ENCODE measurements at regions of chr4 and their contacts with region 1.

Region 1: DNA sequence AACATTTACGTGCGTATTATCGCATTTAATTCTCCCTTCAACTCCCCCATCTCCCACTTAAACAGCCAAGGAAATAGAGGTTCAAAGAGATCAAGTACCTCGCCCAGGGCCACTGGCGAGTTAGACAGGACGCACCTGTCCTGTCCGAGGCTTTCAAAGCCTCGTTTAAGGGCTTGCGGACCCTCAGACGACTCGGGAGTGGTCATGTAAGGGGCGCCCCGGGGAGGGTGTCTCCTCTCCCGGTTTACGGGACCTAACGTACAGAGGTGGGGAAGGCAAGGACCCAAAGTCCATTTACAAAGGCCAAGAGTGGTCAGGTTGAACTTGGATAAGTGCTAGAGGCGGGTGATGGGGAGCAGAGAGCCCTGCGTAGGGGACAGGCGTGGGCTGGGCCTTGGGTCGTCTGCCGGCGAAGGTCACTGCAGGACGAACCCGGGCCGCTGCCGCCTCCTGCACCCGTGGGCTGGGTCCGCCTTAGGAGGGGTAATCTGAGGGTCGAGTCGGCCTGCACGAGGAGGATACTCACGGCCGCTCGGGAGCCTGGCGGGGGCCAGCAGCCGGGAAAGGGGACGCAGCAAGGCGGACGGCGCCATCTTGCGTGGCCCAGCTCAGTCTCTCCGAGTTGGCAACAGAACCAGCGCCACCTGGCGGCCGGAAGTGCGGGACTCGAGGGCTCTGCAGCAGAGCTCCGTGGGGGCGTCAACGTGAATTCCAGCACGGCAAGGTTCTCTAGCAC is 5.9 kb upstream of the NAA15 start:
- DNase-seq: peak; percentile 56
- ATAC-seq: peak; percentile 97
- H3K4me3 ChIP-seq: peak overlapping the region; percentile 93
- H3K27ac ChIP-seq: peak overlapping the region; percentile 94
- H3K4me1 ChIP-seq: peaks cover 16% of the 10 kb centered on the region; the same call in 1 of the 2 replicates
- H3K27me3 ChIP-seq: no peaks in the 10 kb centered on the region
- CTCF ChIP-seq: peak; percentile 92 to 98 (median 98)
- EP300 ChIP-seq: 0 out of 4 replicates have a peak, but pooled peaks of 1 of the 2 experiments have one; percentile 10
- POLR2A ChIP-seq: peak; percentile 97
- RAD21 ChIP-seq: peak; percentile 79

Region 2: DNA sequence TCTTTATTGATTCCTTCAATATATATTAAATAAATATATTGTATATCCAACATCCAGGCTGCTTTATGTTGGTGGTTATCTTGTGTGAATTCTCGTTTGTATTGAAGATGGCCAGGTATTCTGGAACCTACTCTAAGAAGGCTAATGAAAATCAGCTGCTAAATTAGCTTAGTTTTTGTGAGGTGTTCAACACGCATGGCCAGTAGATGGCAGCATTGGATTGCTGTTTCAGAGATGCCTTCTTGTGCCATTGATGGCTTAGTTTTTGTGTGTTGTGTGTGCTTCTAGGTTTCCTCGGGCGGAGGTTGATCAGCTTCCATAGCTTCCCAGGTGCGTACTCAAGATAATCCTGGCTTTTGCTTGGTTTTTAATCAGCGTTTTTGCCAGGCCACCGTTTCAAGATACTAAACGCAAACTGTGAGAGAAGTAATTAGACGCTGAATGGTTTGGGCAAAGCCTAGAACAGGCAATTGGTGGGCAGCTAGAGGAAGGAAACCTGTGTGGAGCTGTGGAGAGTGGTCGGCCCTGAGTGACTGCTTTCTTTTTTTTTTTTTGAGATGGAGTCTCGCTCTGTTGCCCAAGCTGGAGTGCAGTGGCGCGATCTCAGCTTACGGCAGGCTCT is 264.6 kb before region 1 on chr4:
- CTCF ChIA-PET with region 1: interaction called, 26 read pairs
- POLR2A ChIA-PET with region 1: no interaction called
- RAD21 ChIA-PET with region 1: interaction called, 21 read pairs
- SMC1A ChIA-PET with region 1: interaction called, 19 read pairs
- in situ Hi-C with region 1: loop called (anchors 5 kb)
- intact Hi-C with region 1: loop called (anchors 2 kb)
- DNase-seq: peak; percentile 61
- ATAC-seq: peak; percentile 85
- H3K4me3 ChIP-seq: no peak overlapping the region
- H3K27ac ChIP-seq: no peak overlapping the region
- H3K4me1 ChIP-seq: peaks cover 3% of the 10 kb centered on the region; the same call in 1 of the 2 replicates
- H3K27me3 ChIP-seq: no peaks in the 10 kb centered on the region
- CTCF ChIP-seq: peak; percentile 81 to 94 (median 84); a peak in 5 of 6 replicates
- EP300 ChIP-seq: no peak
- POLR2A ChIP-seq: no peak
- RAD21 ChIP-seq: peak; percentile 85

Region 3: GRCh38 chr4:139177868-139178611 is 117.3 kb before region 1 on chr4:
- CTCF ChIA-PET with region 1: interaction called, 4 read pairs
- POLR2A ChIA-PET with region 1: interaction called, 20 read pairs
- RAD21 ChIA-PET with region 1: interaction called, 9 read pairs
- SMC1A ChIA-PET with region 1: interaction called, 13 read pairs
- in situ Hi-C with region 1: no loop called
- intact Hi-C with region 1: loop called (anchors 2 kb)
- DNase-seq: peak; percentile 48
- ATAC-seq: peak; percentile 74
- H3K4me3 ChIP-seq: peak overlapping the region; percentile 79
- H3K27ac ChIP-seq: peak overlapping the region; percentile 57
- H3K4me1 ChIP-seq: peaks cover 4% of the 10 kb centered on the region; the same call in 1 of the 2 replicates
- H3K27me3 ChIP-seq: peaks cover 2 to 3% of the 10 kb centered on the region in 2 experiments; a peak in 2 of 4 replicates
- CTCF ChIP-seq: no peak
- EP300 ChIP-seq: peak; percentile 13 to 32; a peak in 1 of 4 replicates
- POLR2A ChIP-seq: peak; percentile 81
- RAD21 ChIP-seq: no peak

Region 4: DNA sequence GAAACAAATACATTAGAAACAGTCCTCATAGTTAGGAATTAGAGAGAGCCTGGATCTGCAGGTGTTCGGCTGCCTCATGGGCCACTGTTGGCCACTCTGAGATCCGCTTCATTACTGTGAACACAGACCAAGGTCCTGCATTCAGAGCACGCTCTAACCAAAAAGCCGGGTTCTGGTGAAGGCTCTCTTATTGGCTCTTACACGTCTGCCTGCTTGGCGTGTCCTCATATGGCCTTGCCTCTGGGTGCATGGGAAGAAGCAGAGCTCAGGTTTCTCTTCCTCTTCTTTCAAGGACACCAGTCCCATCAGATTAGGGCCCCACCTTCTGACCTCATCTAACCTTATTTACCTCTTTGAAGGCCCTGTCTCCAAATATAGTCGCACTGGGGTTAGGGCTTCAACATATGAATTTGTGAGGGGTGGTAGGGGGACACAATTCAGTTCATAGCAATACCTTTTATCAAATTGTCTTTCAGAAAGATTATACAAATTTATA is 81.3 kb before region 1 on chr4:
- CTCF ChIA-PET with region 1: interaction called, 15 read pairs
- POLR2A ChIA-PET with region 1: no interaction called
- RAD21 ChIA-PET with region 1: interaction called, 8 read pairs
- SMC1A ChIA-PET with region 1: interaction called, 8 read pairs
- in situ Hi-C with region 1: no loop called
- intact Hi-C with region 1: no loop called
- DNase-seq: peak; percentile 65
- ATAC-seq: peak; percentile 98
- H3K4me3 ChIP-seq: no peak overlapping the region
- H3K27ac ChIP-seq: no peak overlapping the region
- H3K4me1 ChIP-seq: peaks cover 10% of the 10 kb centered on the region
- H3K27me3 ChIP-seq: no peaks in the 10 kb centered on the region
- CTCF ChIP-seq: no peak
- EP300 ChIP-seq: peak; percentile 15 to 51; a peak in 2 of 4 replicates
- POLR2A ChIP-seq: no peak
- RAD21 ChIP-seq: no peak

Region 5: DNA sequence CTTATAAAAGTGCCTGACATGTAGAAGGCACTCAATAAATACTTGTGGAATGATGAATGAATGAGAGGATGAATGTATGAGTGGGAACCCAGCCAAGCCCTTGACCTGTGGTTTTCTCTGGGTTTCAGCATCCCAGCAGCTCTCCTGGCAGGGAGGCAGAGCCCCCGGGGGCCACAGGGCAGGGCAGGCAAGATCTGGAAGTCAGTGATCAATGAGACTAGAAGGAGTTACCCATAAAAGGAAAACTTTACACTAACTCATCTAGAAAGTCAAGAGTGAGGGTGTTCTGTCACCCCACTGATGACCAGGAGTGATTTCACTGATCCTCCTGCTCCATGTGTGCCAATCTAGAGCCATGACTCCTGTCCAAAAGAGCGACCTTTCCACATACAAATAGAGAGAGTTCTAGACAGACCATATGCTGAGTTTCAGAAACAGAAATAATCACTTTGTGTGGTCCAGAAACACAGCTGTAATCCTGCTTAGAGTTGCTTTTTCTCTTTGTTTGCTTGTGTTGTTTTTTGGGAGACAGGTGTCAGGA is 52.8 kb before region 1 on chr4:
- CTCF ChIA-PET with region 1: interaction called, 12 read pairs
- POLR2A ChIA-PET with region 1: no interaction called
- RAD21 ChIA-PET with region 1: interaction called, 3 read pairs
- SMC1A ChIA-PET with region 1: interaction called, 6 read pairs
- in situ Hi-C with region 1: no loop called
- intact Hi-C with region 1: no loop called
- DNase-seq: no peak
- ATAC-seq: no peak
- H3K4me3 ChIP-seq: no peak overlapping the region
- H3K27ac ChIP-seq: no peak overlapping the region
- H3K4me1 ChIP-seq: no peaks in the 10 kb centered on the region
- H3K27me3 ChIP-seq: no peaks in the 10 kb centered on the region; a peak in 1 of 4 replicates
- CTCF ChIP-seq: no peak
- EP300 ChIP-seq: no peak
- POLR2A ChIP-seq: no peak
- RAD21 ChIP-seq: no peak

Region 6: DNA sequence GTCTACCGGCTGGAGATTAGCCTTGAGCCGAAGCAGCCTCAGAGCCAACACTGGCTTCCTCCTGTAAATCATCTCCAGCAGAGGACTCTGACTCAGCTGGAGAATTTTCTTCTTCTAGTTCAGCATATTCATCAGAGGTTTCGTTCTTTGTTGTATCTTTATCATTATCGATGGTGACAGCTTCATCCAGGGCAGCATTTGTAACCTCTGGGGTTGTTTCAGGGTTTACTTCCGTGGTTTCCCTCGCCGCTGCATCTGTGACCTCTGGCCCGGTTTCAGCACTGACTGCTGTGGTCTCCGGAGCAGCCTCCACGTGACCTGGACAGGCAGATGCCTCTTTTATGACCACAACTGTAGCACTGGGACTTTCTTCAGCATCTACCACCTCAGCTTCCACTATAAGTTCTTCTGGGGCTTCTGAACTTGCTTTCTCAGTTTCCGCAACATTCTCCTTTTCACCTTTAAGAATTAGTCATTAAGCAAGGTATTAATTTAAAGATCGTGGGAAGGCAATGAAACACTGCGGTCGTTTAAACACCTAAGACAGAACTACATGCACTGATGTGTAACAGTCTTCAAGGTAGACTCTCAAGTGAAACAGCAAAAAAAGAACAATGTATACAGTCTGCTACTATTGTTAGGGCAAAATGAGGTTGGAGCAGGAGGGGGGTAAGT is 28.7 kb before region 1 on chr4:
- CTCF ChIA-PET with region 1: interaction called, 16 read pairs
- POLR2A ChIA-PET with region 1: interaction called, 4 read pairs
- RAD21 ChIA-PET with region 1: interaction called, 22 read pairs
- SMC1A ChIA-PET with region 1: interaction called, 9 read pairs
- in situ Hi-C with region 1: no loop called
- intact Hi-C with region 1: loop called (anchors 2 kb)
- DNase-seq: peak; percentile 96
- ATAC-seq: peak; percentile 97
- H3K4me3 ChIP-seq: no peak overlapping the region; the same call in 1 of the 2 replicates
- H3K27ac ChIP-seq: no peak overlapping the region
- H3K4me1 ChIP-seq: peaks cover 19% of the 10 kb centered on the region
- H3K27me3 ChIP-seq: no peaks in the 10 kb centered on the region
- CTCF ChIP-seq: no peak
- EP300 ChIP-seq: peak; percentile 73 to 91
- POLR2A ChIP-seq: no peak
- RAD21 ChIP-seq: no peak

Region 7: DNA sequence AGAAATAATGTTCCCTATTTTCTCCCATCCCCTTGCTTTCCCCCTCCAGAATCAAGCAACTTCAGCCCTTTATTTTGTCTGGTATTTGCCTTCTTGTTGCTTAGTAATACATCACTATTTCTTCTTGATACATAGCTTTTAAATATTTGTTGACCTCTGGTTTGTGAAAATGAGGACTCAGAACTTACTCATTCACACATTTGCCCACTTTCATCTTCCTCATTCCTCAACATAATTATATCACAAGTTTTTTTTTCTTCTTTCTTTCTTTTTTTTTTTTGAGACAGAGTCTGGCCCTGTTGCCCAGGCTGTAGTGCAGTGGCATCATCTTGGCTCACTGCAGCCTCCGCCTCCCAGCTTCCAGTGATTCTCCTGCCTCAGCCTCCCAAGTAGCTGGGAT is 35.8 kb after region 1 on chr4:
- CTCF ChIA-PET with region 1: interaction called, 18 read pairs
- POLR2A ChIA-PET with region 1: interaction called, 5 read pairs
- RAD21 ChIA-PET with region 1: interaction called, 17 read pairs
- SMC1A ChIA-PET with region 1: interaction called, 25 read pairs
- in situ Hi-C with region 1: no loop called
- intact Hi-C with region 1: no loop called
- DNase-seq: no peak
- ATAC-seq: peak; percentile 44
- H3K4me3 ChIP-seq: no peak overlapping the region
- H3K27ac ChIP-seq: no peak overlapping the region
- H3K4me1 ChIP-seq: peaks cover 12% of the 10 kb centered on the region; the same call in 1 of the 2 replicates
- H3K27me3 ChIP-seq: no peaks in the 10 kb centered on the region
- CTCF ChIP-seq: no peak
- EP300 ChIP-seq: no peak
- POLR2A ChIP-seq: no peak
- RAD21 ChIP-seq: no peak

Region 8: DNA sequence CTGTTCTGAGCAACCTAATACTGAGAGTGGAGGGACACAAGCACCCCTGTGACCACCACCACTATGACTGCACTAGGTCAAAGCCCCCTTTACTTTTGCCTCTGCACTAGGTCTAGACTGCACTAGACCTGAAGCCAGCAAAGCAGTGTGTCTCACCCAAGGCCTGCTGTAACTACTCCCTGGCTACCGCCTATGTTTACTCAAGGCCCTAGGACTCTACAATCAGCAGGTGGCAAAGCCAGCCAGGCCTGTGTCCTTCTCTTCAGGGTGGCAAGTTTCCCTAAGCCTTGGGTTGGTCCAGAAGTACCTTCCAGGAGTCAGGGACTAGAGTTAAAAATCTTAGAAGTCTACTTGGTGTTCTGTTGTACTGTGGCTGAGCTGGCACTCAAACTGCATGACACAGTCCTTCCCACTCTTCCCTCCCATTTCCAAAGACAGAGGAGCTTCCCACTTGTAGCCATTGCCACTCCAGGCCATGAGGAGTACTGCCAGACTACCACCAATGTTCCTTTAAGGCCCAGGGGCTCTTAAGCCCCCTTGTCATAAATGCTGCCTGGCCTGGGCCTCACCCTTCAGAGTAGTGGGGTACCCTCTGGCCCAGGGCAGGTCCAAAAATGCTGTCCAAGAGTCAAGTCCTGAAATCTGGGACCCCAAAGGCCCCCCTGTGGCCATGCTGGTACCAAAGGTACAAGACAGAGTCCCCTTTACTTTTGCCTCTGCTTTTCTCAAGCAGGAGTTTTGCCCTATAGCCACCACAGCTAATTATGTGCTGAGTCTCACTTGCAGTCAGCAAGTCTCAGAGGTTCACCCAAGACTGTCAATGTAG is 174.7 kb after region 1 on chr4:
- CTCF ChIA-PET with region 1: no interaction called
- POLR2A ChIA-PET with region 1: no interaction called
- RAD21 ChIA-PET with region 1: no interaction called
- SMC1A ChIA-PET with region 1: no interaction called
- in situ Hi-C with region 1: no loop called
- intact Hi-C with region 1: no loop called
- DNase-seq: no peak
- ATAC-seq: peak; percentile 33; the same call in 2 of the 3 replicates
- H3K4me3 ChIP-seq: no peak overlapping the region
- H3K27ac ChIP-seq: no peak overlapping the region
- H3K4me1 ChIP-seq: peaks cover 3% of the 10 kb centered on the region; the same call in 1 of the 2 replicates
- H3K27me3 ChIP-seq: no peaks in the 10 kb centered on the region
- CTCF ChIP-seq: no peak
- EP300 ChIP-seq: no peak
- POLR2A ChIP-seq: no peak
- RAD21 ChIP-seq: no peak

Measured in GM12878 (cell line).